Endothelial cell of umbilical vein (primary cell): ENCODE measurements at regions of chr7 and their contacts with region 1.

Region 1: DNA sequence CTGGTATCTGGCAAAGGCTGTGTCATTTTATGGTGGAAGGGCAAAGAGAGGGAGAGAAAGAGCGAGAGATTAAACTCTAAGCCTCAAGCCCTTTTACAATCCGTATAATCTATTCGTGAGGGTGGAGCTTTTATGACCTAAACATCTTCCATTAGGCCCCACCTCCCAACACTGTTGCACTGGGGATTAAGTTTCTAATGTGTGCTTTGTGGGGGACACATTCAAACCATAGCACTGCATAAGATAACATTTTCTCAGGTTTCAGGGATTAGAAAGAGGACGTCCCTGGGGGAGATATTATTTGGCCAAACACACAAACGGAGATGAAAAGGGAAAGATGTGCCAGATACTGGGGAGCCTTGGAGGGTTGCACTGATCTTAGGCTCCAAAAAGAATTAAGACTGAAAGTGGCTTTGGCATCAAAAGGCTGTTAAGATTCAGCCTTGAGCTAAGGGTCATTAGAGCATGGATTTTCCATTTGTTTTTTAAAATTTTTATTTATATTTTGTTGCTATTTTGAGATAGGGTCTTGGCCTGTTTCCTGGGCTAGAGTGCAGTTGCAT is 19.0 kb downstream of the COL26A1 start:
- DNase-seq: no peak
- H3K4me3 ChIP-seq: no peak overlapping the region
- H3K27ac ChIP-seq: no peak overlapping the region
- H3K4me1 ChIP-seq: no peaks in the 10 kb centered on the region
- H3K27me3 ChIP-seq: peaks cover 5 to 17% of the 10 kb centered on the region in 2 experiments
- CTCF ChIP-seq: no peak
- POLR2A ChIP-seq: no peak

Region 2: GRCh38 chr7:100827330-100828227 is 554.1 kb before region 1 on chr7 and contains the start of gene EPHB4:
- CTCF ChIA-PET with region 1: no interaction called
- POLR2A ChIA-PET with region 1: no interaction called
- dilution Hi-C with region 1: no loop called
- intact Hi-C with region 1: no loop called
- DNase-seq: peak; percentile 88
- H3K4me3 ChIP-seq: peak within 1 kb of the TSS; percentile 88 to 92 (median 90)
- H3K27ac ChIP-seq: peak within 1 kb of the TSS; percentile 94
- H3K4me1 ChIP-seq: peaks cover 23% of the 10 kb centered on the region
- H3K27me3 ChIP-seq: no peaks in the 10 kb centered on the region
- CTCF ChIP-seq: peak; percentile 42 to 62
- POLR2A ChIP-seq: peak; percentile 17
- total RNA-seq, gene EPHB4: 148 and 193 TPM in 2 replicates

Region 3: GRCh38 chr7:101138213-101138870 is 243.3 kb before region 1 on chr7:
- CTCF ChIA-PET with region 1: no interaction called
- POLR2A ChIA-PET with region 1: no interaction called
- dilution Hi-C with region 1: no loop called
- intact Hi-C with region 1: no loop called
- DNase-seq: peak; percentile 99
- H3K4me3 ChIP-seq: no peak overlapping the region
- H3K27ac ChIP-seq: peak overlapping the region; percentile 30
- H3K4me1 ChIP-seq: peaks cover 39% of the 10 kb centered on the region
- H3K27me3 ChIP-seq: no peaks in the 10 kb centered on the region
- CTCF ChIP-seq: peak; percentile 64 to 75
- POLR2A ChIP-seq: peak; percentile 82

Region 4: DNA sequence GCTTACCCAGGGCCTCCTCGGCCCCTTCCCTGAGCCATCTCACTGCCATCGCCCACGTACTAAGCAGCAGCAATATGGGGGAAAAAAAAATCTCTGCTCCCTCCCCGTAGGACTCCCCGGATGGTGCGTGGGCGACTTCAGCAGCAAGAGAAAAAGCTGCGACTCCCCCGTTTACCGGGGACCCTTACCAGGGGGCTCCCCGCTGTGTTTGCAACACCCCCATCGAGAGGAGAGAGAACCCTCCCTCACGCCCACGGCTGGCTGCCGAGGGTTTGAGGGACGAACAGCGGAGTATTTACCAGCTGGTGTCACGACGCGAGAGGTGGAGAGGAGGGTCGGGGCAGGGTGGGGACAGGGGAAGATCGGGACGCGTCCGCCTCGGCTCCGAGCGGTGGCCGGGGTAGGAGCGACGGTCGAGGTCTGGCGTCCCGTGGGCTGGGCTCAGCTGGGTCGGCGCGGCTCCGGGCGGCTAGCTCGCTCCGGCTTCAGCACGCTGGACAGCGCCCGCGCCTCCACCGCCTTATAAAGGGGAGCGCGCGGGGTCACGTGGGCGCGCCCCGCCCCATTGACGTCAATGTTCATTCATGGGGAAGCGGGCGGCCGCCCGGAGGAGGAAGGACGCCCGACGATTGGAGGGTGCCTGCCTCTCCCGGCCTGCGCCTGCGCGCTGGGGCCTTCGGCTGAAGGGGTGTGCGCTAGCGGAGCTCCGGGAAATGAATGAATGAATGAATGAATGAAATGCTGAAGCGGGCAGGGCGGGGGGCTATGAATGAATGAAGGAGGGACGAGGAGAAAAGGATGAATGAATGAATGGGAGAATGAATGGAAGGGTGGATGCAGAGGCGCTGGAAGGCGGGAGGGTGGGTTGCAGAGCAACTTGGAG is 216.3 kb before region 1 on chr7 and contains the start of gene VGF:
- CTCF ChIA-PET with region 1: no interaction called
- POLR2A ChIA-PET with region 1: no interaction called
- dilution Hi-C with region 1: no loop called
- intact Hi-C with region 1: no loop called
- DNase-seq: peak; percentile 86
- H3K4me3 ChIP-seq: no peak within 1 kb of the TSS
- H3K27ac ChIP-seq: no peak within 1 kb of the TSS
- H3K4me1 ChIP-seq: peaks cover 16% of the 10 kb centered on the region
- H3K27me3 ChIP-seq: peaks cover 52 to 58% of the 10 kb centered on the region in 2 experiments
- CTCF ChIP-seq: no peak
- POLR2A ChIP-seq: no peak
- total RNA-seq, gene VGF: not detected in 2 replicates

Region 5: DNA sequence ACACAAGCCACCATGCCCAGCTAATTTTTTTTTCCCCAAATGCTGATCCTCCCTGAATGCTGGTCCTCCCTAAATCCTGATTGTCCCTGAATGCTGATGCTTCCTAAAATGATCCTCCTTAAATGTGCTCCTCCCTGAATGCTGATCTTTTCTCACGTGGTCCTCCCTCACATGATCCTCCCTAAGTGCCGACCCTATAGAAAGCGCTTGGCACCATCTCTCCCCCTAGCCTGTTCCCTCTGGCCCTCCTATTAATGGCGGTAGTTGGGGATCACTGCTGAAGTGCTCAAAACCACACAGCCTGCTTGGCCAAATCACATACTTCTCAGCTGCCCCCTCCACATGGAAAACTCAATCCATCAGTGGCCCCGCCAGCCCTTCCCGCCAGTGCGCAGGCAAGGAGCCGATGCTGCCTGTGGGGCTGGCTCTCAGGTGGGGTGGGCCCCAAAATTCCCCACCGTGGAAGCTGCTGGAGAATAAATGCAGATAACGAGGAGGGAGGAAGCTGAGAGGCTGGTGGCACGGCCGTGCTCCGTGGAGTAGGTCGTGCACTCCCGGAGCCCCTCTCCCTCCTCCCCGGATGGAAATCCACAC is 23.9 kb after region 1 on chr7:
- CTCF ChIA-PET with region 1: no interaction called
- POLR2A ChIA-PET with region 1: no interaction called
- dilution Hi-C with region 1: no loop called
- intact Hi-C with region 1: loop called (anchors 1 kb)
- DNase-seq: no peak
- H3K4me3 ChIP-seq: no peak overlapping the region
- H3K27ac ChIP-seq: no peak overlapping the region
- H3K4me1 ChIP-seq: peaks cover 3% of the 10 kb centered on the region
- H3K27me3 ChIP-seq: peaks cover 4 to 8% of the 10 kb centered on the region in 2 experiments
- CTCF ChIP-seq: no peak
- POLR2A ChIP-seq: no peak

Region 6: DNA sequence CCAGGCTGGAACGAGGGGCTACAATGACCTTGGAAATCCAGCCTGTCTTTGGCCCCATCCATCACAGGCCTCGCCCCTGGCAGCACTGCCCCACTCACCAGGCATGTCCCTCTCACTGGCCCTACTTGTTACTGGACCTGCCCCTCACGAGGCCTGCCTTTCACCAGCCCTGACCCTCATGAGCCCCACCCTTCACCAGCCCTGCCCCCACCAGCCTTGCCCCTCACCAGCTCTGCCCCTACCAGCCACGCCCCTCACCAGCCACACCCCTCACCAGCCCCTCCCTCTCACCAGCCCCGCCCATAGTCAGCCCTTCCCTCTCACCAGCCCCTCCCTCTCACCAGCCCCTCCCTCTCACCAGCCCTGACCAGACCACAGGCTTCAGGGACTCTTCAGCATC is 38.8 kb after region 1 on chr7:
- CTCF ChIA-PET with region 1: no interaction called
- POLR2A ChIA-PET with region 1: no interaction called
- dilution Hi-C with region 1: no loop called
- intact Hi-C with region 1: no loop called
- DNase-seq: no peak
- H3K4me3 ChIP-seq: no peak overlapping the region
- H3K27ac ChIP-seq: no peak overlapping the region
- H3K4me1 ChIP-seq: no peaks in the 10 kb centered on the region
- H3K27me3 ChIP-seq: no peaks in the 10 kb centered on the region
- CTCF ChIP-seq: no peak
- POLR2A ChIP-seq: no peak